ENCODE measurements at regions of chr6 and their contacts with region 1.

Region 1: DNA sequence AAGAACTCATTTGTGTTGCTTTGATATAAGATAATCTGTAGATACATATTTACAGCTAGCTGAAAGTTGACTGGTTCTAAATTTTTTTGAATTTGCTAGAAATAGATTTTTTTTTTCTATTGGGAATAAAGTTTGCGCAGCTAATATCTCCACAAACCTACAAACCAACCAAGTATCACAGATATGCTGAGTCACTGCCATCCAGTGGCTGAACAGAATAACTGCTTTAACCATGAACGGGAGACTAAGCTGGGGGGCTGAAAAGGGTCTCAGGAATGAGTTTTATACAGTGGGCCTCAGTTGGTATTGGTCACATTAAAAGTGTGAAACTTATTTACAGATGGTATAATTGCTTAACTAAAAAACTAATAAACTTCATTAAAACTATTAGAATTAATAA is 326.7 kb upstream of the CNR1 start:
- DNase-seq: no peak
- H3K4me3 ChIP-seq: no peak overlapping the region
- H3K27ac ChIP-seq: peak overlapping the region in 1 of 2 donors; percentile 51
- H3K4me1 ChIP-seq: peaks cover 0 to 47% (median 1%) of the 10 kb centered on the region in 4 donors
- H3K27me3 ChIP-seq: no peaks in the 10 kb centered on the region
- CTCF ChIP-seq: peak; percentile 51 to 55

Region 2: DNA sequence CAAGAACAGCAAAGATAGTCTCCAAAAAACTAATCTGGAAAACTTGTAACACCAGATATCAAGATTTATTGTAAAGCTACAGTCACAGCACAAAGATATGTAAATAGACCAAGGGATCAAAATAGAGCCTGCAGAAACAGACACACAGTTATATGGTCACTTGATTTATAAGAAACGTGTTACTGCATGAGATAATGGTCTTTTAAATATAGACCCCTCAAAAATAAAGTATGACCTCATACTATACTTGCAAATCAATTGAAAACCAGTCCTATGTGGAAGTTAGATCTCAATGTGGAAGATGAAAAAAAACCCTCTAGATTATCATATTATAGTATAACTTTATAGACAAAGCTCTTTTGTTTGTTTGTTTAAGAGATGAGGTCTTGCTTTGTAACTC is 79.4 kb before region 1 on chr6:
- intact Hi-C with region 1: no loop called
- DNase-seq: no peak
- H3K4me3 ChIP-seq: no peak overlapping the region
- H3K27ac ChIP-seq: no peak overlapping the region
- H3K4me1 ChIP-seq: no peaks in the 10 kb centered on the region
- H3K27me3 ChIP-seq: no peaks in the 10 kb centered on the region
- CTCF ChIP-seq: no peak

Region 3: GRCh38 chr6:88870717-88871330 is 378.0 kb after region 1 on chr6:
- intact Hi-C with region 1: loop called (anchors 10 kb)
- DNase-seq: no peak
- H3K4me3 ChIP-seq: no peak overlapping the region
- H3K27ac ChIP-seq: peak overlapping the region in 1 of 2 donors; percentile 23
- H3K4me1 ChIP-seq: peaks cover 0 to 40% (median 13%) of the 10 kb centered on the region in 4 donors
- H3K27me3 ChIP-seq: no peaks in the 10 kb centered on the region
- CTCF ChIP-seq: peak; percentile 63 to 74

Region 4: GRCh38 chr6:89050155-89050554 is 557.3 kb after region 1 on chr6:
- intact Hi-C with region 1: no loop called
- DNase-seq: peak; percentile 76 to 80
- H3K4me3 ChIP-seq: no peak overlapping the region
- H3K27ac ChIP-seq: no peak overlapping the region
- H3K4me1 ChIP-seq: peaks cover 0 to 10% (median 6%) of the 10 kb centered on the region in 4 donors
- H3K27me3 ChIP-seq: no peaks in the 10 kb centered on the region
- CTCF ChIP-seq: no peak

Region 5: GRCh38 chr6:89311853-89312531 is 819.2 kb after region 1 on chr6:
- intact Hi-C with region 1: no loop called
- DNase-seq: peak; percentile 77 to 84
- H3K4me3 ChIP-seq: peak overlapping the region in 1 of 2 donors; percentile 28
- H3K27ac ChIP-seq: peak overlapping the region; percentile 56
- H3K4me1 ChIP-seq: peaks cover 0 to 25% (median 23%) of the 10 kb centered on the region in 4 donors
- H3K27me3 ChIP-seq: no peaks in the 10 kb centered on the region
- CTCF ChIP-seq: peak; percentile 38 to 54

Measured in tibial artery (tissue), 4 donors.